Psoas muscle (tissue), 8 donors: ENCODE measurements at regions of chr4 and their contacts with region 1.

Region 1: GRCh38 chr4:95660719-95661118 is 111.9 kb upstream of the UNC5C start:
- DNase-seq: no peak
- ATAC-seq: no peak
- H3K4me3 ChIP-seq: no peak overlapping the region
- H3K27ac ChIP-seq: no peak overlapping the region
- H3K4me1 ChIP-seq: no peaks in the 10 kb centered on the region
- H3K27me3 ChIP-seq: no peaks in the 10 kb centered on the region
- CTCF ChIP-seq: no peak

Region 2: DNA sequence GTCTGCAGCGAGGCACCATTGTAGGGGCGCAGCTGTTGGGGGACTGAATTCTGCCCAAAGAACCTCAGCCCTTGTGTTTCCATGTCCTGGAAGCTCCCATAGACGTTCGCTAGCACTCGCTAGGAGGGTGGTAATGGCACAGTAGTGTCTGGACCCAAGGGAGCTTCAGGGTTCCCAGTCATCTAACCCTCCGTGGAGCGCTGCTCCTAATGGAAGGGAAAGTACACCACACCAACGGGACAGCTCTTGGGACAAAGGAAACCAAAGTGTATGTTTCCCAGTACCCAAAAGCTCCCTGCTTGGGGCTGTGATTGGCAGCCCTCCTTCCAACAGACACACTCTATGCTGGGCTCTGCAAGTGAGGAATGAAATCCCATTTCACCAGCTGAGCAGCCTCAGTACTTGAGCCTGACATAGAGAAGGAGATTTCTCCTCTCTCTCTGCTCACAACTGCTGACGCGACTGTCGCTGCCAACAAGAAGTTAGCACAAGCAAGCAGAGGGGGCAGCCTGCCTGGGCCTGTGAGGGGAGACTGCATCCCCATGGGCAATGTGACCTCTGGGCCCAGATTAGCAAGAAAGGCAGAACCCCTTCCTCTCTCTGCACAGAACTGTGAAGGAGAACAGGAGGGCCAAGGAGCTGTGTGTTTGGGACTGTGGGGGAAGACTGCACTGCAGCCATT is 1520.6 kb before region 1 on chr4:
- intact Hi-C with region 1: loop called in 1 of 2 experiments (anchors 5 kb)
- DNase-seq: no peak
- ATAC-seq: no peak
- H3K4me3 ChIP-seq: no peak overlapping the region
- H3K27ac ChIP-seq: no peak overlapping the region
- H3K4me1 ChIP-seq: no peaks in the 10 kb centered on the region
- H3K27me3 ChIP-seq: no peaks in the 10 kb centered on the region
- CTCF ChIP-seq: no peak

Region 3: DNA sequence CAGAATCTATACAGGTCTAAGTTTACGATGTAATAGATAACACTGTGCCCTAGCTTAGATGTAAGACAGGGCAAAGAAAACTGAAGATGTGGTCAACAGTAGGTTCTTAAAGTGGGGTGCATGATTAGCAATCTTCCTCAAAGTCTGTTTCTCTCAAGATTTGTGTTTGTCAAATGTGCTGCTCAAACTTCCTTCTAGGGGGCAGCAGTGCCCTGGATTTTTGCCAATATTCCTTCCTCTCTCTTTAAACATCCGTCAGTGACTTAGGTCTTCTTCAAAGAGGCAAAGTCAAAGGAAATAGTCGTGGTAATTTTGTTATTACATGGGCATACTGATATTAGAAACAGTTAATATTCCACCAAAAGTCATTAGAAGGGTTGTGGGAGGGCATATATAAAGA is 175.0 kb after region 1 on chr4:
- intact Hi-C with region 1: no loop called
- DNase-seq: no peak
- ATAC-seq: no peak
- H3K4me3 ChIP-seq: no peak overlapping the region
- H3K27ac ChIP-seq: no peak overlapping the region
- H3K4me1 ChIP-seq: no peaks in the 10 kb centered on the region
- H3K27me3 ChIP-seq: no peaks in the 10 kb centered on the region
- CTCF ChIP-seq: no peak